Sigmoid colon (tissue), 7 donors: ENCODE measurements at regions of chr17 and their contacts with region 1.

Region 1: DNA sequence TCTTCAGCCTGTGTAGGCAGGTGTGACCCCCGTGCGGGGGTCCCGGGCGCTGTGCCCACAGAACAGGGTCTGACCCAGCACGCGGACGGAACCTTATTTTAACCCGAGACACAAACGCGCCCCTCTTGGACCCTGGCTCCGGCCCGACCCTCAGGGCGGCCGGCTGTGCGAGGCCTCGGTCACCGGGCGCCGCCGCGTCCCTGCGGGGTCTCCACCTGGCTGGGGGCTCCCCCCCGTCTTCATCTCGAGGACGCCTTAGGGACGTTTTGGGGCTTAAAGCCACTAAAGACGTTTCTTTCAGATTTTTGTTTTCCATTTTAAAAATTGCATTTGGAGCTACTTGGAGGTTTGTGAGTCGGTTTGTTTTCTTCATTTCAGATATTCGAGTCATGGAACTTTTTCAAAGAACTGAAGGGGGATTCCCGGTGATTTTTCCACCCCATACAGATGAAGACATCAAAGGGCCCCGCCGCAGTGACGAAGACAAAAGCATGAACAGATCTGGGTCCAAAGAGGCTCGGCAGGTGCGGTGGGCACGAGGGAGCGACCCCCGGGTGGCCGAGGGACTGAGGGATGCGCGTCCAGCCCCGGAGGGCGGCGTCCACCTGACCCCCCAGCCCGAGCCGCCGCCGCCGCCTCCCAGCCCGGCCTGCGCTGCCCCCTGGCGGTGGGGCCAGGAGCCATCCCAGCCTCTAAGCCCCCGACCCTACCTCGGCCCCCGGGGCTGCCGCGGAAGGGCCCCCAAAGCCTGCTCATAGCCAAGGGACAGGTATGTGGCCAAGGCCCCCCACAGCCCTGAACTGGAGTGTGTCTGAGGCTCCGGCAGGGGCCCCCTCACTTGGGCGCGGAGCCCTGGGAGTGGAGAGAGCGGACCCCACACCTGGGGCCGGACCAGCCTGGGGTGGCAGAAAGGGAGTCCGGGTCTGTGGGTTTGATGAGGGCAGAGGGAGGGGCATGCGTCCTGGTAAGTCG is 3.8 kb upstream of the CD7 start:
- DNase-seq: no peak
- H3K4me3 ChIP-seq: peak overlapping the region in 1 of 4 donors; percentile 25
- H3K27ac ChIP-seq: no peak overlapping the region
- H3K4me1 ChIP-seq: peaks cover 0 to 11% (median 6%) of the 10 kb centered on the region in 4 donors
- H3K27me3 ChIP-seq: peaks cover under 1 to 7% (median 6%) of the 10 kb centered on the region in 3 donors
- CTCF ChIP-seq: peak; percentile 82 to 97 (median 90)
- EP300 ChIP-seq: no peak
- POLR2A ChIP-seq: no peak

Region 2: GRCh38 chr17:82205719-82206508 is 115.3 kb before region 1 on chr17:
- intact Hi-C with region 1: loop called (anchors 2 kb)
- DNase-seq: peak; percentile 93
- H3K4me3 ChIP-seq: peak overlapping the region in 1 of 4 donors; percentile 24
- H3K27ac ChIP-seq: peak overlapping the region; percentile 56 to 68 (median 64)
- H3K4me1 ChIP-seq: peaks cover 0 to 12% (median 10%) of the 10 kb centered on the region in 4 donors
- H3K27me3 ChIP-seq: no peaks in the 10 kb centered on the region
- CTCF ChIP-seq: peak; percentile 89 to 95 (median 93)
- EP300 ChIP-seq: no peak
- POLR2A ChIP-seq: peak; percentile 22 to 26

Region 3: DNA sequence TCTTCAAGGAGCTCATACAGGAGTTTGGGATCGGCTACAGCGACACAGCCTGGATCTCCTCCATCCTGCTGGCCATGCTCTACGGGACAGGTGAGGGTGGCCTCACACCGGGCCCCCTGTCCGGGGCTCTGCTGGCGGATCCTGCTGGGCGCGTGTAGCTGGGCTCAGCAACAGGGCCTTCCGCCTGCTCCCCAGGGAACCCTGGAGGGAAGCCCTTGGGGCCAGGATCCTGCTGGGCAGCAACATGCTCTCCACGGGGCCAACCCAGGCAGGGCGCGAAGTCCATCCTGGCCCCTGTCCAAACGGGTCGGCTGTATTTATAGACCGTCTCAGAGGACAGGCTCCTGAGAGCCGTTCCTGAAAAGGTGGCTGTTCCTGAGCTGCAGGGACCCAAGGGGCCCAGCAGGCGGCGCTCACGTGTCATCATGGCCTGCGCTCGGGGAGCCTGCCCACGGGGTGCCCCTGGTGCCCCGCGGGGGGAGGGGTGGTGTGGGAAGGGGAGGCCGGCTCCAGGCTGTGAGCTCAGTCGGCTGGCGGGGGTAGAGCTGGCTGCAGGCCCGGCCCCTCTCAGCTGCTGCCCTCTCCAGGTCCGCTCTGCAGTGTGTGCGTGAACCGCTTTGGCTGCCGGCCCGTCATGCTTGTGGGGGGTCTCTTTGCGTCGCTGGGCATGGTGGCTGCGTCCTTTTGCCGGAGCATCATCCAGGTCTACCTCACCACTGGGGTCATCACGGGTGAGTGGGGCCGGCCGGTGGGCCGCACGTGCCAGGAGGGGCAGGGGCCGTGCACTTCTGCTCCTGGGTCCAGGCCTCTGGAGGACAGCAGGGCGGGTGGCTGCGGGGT is 84.9 kb before region 1 on chr17:
- intact Hi-C with region 1: loop called (anchors 1 kb)
- DNase-seq: peak; percentile 89
- H3K4me3 ChIP-seq: no peak overlapping the region
- H3K27ac ChIP-seq: peak overlapping the region; percentile 62 to 90 (median 86)
- H3K4me1 ChIP-seq: peaks cover 0 to 83% (median 70%) of the 10 kb centered on the region in 4 donors
- H3K27me3 ChIP-seq: no peaks in the 10 kb centered on the region
- CTCF ChIP-seq: peak; percentile 85 to 97 (median 96)
- EP300 ChIP-seq: no peak
- POLR2A ChIP-seq: no peak

Region 4: GRCh38 chr17:82246365-82247174 is 74.7 kb before region 1 on chr17:
- intact Hi-C with region 1: no loop called
- DNase-seq: no peak
- H3K4me3 ChIP-seq: no peak overlapping the region
- H3K27ac ChIP-seq: peak overlapping the region; percentile 79 to 90 (median 86)
- H3K4me1 ChIP-seq: peaks cover 0 to 82% (median 73%) of the 10 kb centered on the region in 4 donors
- H3K27me3 ChIP-seq: no peaks in the 10 kb centered on the region
- CTCF ChIP-seq: no peak
- EP300 ChIP-seq: no peak
- POLR2A ChIP-seq: no peak

Region 5: GRCh38 chr17:82440991-82441627 is 119.9 kb after region 1 on chr17:
- intact Hi-C with region 1: no loop called
- DNase-seq: peak; percentile 77
- H3K4me3 ChIP-seq: peak overlapping the region in 1 of 4 donors; percentile 7
- H3K27ac ChIP-seq: peak overlapping the region; percentile 12 to 52 (median 26)
- H3K4me1 ChIP-seq: peaks cover 0 to 11% (median 0%) of the 10 kb centered on the region in 4 donors
- H3K27me3 ChIP-seq: no peaks in the 10 kb centered on the region
- CTCF ChIP-seq: no peak
- EP300 ChIP-seq: no peak
- POLR2A ChIP-seq: no peak

Region 6: GRCh38 chr17:82489117-82489516 is 167.9 kb after region 1 on chr17:
- intact Hi-C with region 1: no loop called
- DNase-seq: peak; percentile 70
- H3K4me3 ChIP-seq: no peak overlapping the region
- H3K27ac ChIP-seq: peak overlapping the region in 3 of 4 donors; percentile 50 to 76 (median 51)
- H3K4me1 ChIP-seq: peaks cover 0 to 23% (median 12%) of the 10 kb centered on the region in 4 donors
- H3K27me3 ChIP-seq: no peaks in the 10 kb centered on the region
- CTCF ChIP-seq: no peak
- EP300 ChIP-seq: no peak
- POLR2A ChIP-seq: no peak